ENCODE measurements at regions of chr10 and their contacts with region 1.

Region 1: DNA sequence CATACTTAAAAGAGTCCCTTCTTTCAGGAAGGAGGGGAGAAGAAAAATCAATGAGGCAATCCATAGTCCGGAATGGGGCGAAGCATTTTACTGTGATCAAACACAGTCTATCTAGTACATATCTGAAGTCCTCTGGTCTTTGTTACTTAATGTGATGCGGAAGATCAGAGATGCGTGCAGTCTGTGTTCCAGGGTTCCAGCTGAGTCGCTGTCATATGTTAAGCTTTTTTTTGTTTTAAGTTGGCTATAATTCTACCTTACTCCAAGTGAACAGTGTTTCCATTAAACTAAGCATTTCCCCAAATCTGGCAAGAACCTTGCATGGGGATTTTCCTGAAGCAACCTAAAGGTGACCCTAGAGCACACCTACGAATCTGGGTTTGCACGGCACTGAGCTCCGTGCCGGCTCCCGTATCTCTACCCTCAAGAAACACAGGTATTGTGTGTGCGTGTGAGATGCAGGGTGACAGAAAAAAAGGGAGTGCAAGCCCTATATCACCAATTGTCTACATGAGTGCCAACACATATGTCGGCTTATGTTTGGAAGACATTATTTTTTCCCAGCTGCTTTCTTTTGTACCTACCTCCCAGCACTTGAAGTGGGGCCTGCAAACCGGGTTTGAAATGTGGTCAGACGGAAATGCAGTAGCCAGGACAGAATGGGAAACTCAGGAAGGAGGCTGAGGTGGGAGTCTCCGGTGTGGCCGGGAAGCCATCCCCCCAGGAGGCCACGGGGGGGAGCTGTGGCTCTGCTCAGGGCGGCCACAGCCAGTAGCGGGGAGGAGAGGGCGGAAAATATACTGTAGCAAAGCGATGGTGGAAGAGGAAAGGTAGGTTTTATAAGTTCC is 435.8 kb upstream of the MGMT start:
- DNase-seq: peak; percentile 15
- ATAC-seq: peak; percentile 97
- H3K4me3 ChIP-seq: no peak overlapping the region
- H3K27ac ChIP-seq: no peak overlapping the region
- H3K4me1 ChIP-seq: no peaks in the 10 kb centered on the region
- H3K27me3 ChIP-seq: peaks cover 5 to 50% of the 10 kb centered on the region in 2 experiments; a peak in 3 of 5 replicates
- CTCF ChIP-seq: peak; percentile 89
- EP300 ChIP-seq: no peak
- POLR2A ChIP-seq: no peak
- RAD21 ChIP-seq: peak; percentile 83

Region 2: DNA sequence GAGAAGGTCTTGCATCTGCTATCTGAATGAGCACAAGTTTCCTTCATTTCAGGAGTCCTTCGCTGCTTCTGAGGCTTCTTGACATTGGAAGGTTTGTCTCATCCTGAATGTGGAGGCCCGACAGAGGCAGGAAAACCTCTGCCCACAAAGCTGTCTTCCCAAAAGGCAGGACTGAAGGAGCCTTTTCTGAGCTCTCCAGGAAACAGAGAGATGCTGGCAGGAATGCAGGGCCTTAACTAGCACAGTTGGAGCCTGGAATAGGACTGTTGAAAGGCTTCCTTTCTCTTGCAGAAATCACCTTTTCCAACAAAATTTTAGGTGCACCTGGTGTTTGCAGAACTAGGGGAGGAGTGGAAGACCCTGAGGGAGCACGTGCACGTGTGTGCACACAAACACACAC is 267.6 kb before region 1 on chr10:
- CTCF ChIA-PET with region 1: no interaction called
- POLR2A ChIA-PET with region 1: no interaction called
- in situ Hi-C with region 1: no loop called
- intact Hi-C with region 1: no loop called
- DNase-seq: no peak
- ATAC-seq: no peak
- H3K4me3 ChIP-seq: no peak overlapping the region
- H3K27ac ChIP-seq: no peak overlapping the region
- H3K4me1 ChIP-seq: no peaks in the 10 kb centered on the region
- H3K27me3 ChIP-seq: no peaks in the 10 kb centered on the region; a peak in 1 of 5 replicates
- CTCF ChIP-seq: no peak
- EP300 ChIP-seq: no peak
- POLR2A ChIP-seq: no peak
- RAD21 ChIP-seq: no peak

Region 3: GRCh38 chr10:129971381-129972144 is 940.3 kb after region 1 on chr10:
- CTCF ChIA-PET with region 1: interaction called, 15 read pairs
- POLR2A ChIA-PET with region 1: no interaction called
- in situ Hi-C with region 1: loop called (anchors 5 kb)
- intact Hi-C with region 1: loop called (anchors 1 kb)
- DNase-seq: peak; percentile 8
- ATAC-seq: peak; percentile 89
- H3K4me3 ChIP-seq: peak overlapping the region in 2 of 3 experiments; percentile 40 to 59; a peak in 3 of 6 replicates
- H3K27ac ChIP-seq: no peak overlapping the region
- H3K4me1 ChIP-seq: no peaks in the 10 kb centered on the region
- H3K27me3 ChIP-seq: peaks cover 6 to 66% of the 10 kb centered on the region in 2 experiments
- CTCF ChIP-seq: peak; percentile 52
- EP300 ChIP-seq: no peak
- POLR2A ChIP-seq: no peak
- RAD21 ChIP-seq: peak; percentile 90

Measured in HepG2 (cell line).